ENCODE measurements at regions of chr20 and their contacts with region 1.

Region 1: GRCh38 chr20:58246346-58246745 is 17.9 kb upstream of the ANKRD60 start:
- DNase-seq: no peak
- CTCF ChIP-seq: no peak

Region 2: GRCh38 chr20:58209652-58210397 is 36.5 kb before region 1 on chr20:
- in situ Hi-C with region 1: no loop called
- DNase-seq: peak; percentile 95
- CTCF ChIP-seq: peak; percentile 100

Region 3: GRCh38 chr20:58458180-58459057 is 212.1 kb after region 1 on chr20:
- in situ Hi-C with region 1: loop called (anchors 10 kb)
- DNase-seq: peak; percentile 87
- CTCF ChIP-seq: no peak